Activated T-helper 2 cell treated with anti-CD3 and anti-CD28 coated beads, Interferon-gamma antibody, Interleukin-2, Interleukin-4, amounts not matched to agents 10 μg/mL and 5 μg/mL and 100 μg/mL, durations not matched to agents 14 hours and 24 hours and 36 hours (primary cell): ENCODE measurements at regions of chr11 and their contacts with region 1.

Region 1: DNA sequence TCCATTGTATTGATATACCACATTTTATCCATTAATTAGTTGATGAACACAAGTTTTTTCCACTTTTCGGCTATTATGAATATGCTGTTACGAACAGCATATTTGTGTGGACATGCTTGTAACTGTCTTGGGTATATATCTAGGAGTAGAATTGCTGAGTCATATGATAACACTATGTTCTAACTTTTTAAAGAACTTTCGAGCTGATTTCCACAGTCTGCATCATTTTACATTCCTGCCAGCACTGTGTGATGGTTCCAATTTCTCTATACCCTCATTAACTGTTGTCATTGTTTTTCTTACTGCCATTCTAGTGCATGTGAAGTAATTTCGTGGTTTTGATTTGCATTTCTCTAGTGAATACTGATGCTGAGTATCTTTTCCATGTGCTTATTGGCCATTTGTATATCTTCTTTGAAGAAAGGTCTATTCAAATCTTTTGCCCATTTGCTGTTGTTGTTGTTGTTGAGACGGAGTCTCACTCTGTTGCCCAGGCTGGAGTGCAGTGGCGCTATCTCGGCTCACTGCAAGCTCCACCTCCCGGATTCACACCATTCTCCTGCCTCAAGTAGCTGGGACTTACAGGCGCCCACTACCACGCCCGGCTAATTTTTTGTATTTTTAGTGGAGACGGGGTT is 7.4 kb upstream of the RCE1 start:
- DNase-seq: no peak
- H3K4me3 Mint-ChIP-seq: no peak overlapping the region
- H3K27ac Mint-ChIP-seq: no peak overlapping the region
- H3K4me1 Mint-ChIP-seq: peaks cover 17% of the 10 kb centered on the region
- H3K27me3 Mint-ChIP-seq: no peaks in the 10 kb centered on the region

Region 2: DNA sequence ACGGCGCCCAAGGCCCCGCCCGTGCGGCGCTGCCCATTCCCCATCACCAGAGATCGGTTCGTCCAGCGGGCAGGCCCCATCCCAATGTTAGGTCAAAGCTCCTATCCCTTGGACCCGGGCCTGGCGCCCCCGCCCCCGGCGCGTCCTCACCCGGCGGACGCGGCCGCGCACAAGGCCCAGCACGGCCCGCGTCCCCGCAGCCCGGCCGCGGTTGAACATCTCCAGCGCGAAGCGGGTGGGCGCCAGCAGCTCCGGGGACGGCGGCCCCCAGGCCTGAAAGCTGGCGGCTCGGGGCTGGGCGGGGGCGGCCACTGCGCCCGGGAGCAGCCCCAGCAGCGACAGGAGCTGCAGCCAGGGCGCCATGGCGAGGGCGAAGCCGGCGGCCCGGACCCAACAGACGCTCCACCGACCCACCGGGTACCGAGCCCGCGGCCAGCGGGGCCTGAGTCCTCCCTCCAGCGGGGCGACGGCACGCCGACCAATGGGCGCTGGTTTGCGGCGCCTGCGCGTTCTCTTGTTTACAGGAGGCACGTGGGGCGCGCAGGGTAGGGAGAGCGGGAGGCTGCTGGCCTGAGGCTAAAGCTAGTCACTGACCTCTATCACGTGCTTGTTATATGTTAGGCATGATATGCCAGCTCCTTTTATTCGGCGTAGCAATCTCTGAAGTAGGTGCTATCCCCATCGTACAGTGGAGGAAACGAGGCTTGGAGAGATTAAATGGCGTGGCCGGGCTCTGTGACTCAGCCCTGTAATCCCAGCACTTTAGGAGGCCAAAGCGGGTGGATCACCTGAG is 267.6 kb before region 1 on chr11 and contains the start of gene CTSF:
- intact Hi-C with region 1: loop called (anchors 10 kb)
- DNase-seq: peak; percentile 58
- H3K4me3 Mint-ChIP-seq: peak within 1 kb of the TSS; percentile 61
- H3K27ac Mint-ChIP-seq: no peak within 1 kb of the TSS
- H3K4me1 Mint-ChIP-seq: peaks cover 2% of the 10 kb centered on the region
- H3K27me3 Mint-ChIP-seq: peaks cover 23% of the 10 kb centered on the region
- total RNA-seq, gene CTSF: 0.73 and 0.85 TPM in 2 replicates

Region 3: DNA sequence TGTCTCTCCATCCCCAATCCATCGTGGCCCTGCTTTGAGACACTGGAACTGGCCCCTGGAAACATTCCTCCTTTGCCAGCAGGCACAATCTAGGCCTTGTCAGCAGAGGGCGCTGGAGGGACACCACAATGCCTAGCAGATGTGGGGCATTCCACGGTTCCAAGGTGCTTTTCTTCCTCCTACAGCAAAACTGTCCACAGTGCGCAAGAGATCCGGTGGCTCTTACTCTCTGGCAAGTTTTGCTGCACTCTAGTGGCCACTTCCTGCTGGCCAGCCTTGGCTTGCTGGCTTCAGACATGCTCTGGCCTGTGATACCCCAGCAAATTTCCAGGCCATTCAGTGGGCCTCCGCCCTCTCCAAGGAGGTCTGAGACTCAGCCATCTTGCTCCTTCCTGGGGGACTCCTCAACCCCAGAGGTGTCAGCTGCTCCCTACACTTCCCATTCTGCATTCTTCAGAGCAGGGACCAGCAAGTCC is 141.1 kb before region 1 on chr11:
- intact Hi-C with region 1: loop called (anchors 1 kb)
- DNase-seq: peak; percentile 69
- H3K4me3 Mint-ChIP-seq: no peak overlapping the region
- H3K27ac Mint-ChIP-seq: no peak overlapping the region
- H3K4me1 Mint-ChIP-seq: no peaks in the 10 kb centered on the region
- H3K27me3 Mint-ChIP-seq: no peaks in the 10 kb centered on the region

Region 4: GRCh38 chr11:66744485-66745340 is 91.2 kb before region 1 on chr11:
- intact Hi-C with region 1: loop called (anchors 10 kb)
- DNase-seq: peak; percentile 89
- H3K4me3 Mint-ChIP-seq: peak overlapping the region; percentile 97
- H3K27ac Mint-ChIP-seq: peak overlapping the region; percentile 80
- H3K4me1 Mint-ChIP-seq: no peaks in the 10 kb centered on the region
- H3K27me3 Mint-ChIP-seq: no peaks in the 10 kb centered on the region

Region 5: GRCh38 chr11:67006139-67006884 is 170.4 kb after region 1 on chr11:
- intact Hi-C with region 1: no loop called
- DNase-seq: no peak
- H3K4me3 Mint-ChIP-seq: no peak overlapping the region
- H3K27ac Mint-ChIP-seq: no peak overlapping the region
- H3K4me1 Mint-ChIP-seq: peaks cover 4% of the 10 kb centered on the region
- H3K27me3 Mint-ChIP-seq: no peaks in the 10 kb centered on the region